PC-3 (cell line): ENCODE measurements at regions of chr2 and their contacts with region 1.

Region 1: DNA sequence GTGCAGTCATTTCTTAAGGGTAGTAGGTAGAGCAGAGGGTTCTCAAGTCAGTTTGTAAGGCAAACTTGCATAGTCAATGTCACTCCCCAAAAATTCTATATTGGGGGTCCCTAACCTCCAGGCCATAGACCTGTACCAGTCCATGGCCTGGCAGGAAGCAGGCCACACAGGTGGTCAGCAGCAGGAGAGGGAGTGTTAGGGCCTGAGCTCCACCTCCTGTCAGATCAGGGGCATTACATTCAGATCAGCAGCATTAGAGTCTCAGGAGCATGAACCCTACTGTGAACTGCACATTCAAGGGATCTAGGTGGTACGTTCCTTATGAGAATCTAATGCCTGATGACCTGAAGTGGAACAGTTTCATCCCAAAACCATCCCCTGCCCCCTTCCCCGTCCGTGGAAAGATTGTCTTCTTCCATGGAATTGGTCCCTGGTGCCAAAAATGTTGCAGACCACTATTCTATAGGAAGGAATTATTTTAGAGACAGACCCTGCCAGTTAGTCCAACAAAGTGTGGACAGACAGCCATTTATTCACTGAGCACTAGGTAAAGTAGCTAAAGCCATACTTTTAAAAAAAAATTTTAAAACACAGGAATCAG is 6.7 kb downstream of the COA5 start:
- DNase-seq: peak; percentile 61
- ATAC-seq: peak; percentile 85
- H3K4me3 ChIP-seq: no peak overlapping the region
- H3K27ac ChIP-seq: no peak overlapping the region
- H3K4me1 ChIP-seq: peaks cover 30% of the 10 kb centered on the region
- H3K27me3 ChIP-seq: no peaks in the 10 kb centered on the region
- CTCF ChIP-seq: peak; percentile 86

Region 2: DNA sequence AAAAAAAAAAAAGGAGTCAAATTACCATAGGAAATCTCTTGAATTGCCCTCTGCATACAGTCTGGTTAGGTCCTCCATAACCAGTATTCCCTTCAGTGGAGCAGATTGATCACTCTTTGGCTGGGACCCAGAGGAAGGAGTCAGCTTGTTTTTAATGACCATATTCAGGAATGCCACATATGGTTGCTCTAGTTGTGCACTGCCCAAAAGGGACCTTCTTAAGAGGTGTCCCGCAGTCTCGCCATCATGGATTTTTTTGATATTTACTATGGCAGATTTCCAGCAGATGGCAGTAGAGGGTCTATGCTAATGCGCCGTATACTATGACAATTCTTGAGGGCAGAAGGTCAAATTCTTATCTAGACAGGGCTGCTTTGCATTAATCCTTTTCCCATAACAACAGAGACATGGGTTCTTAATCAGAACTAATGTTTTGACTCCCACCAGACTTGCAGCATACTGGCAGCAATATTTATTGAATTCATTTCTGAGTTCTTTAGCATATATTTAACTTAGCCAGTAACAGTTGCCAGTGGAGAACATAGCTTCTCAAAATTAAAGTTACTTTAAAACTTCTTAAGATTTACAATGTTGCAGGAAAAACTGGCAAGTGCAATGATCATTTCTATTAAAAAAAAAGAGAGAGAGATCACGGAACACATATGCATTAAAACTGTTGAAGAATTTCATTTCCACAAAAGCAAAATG is 188.7 kb before region 1 on chr2:
- CTCF ChIA-PET with region 1: no interaction called
- POLR2A ChIA-PET with region 1: no interaction called
- intact Hi-C with region 1: loop called (anchors 1 kb)
- DNase-seq: peak; percentile 87
- ATAC-seq: peak; percentile 93
- H3K4me3 ChIP-seq: no peak overlapping the region
- H3K27ac ChIP-seq: no peak overlapping the region
- H3K4me1 ChIP-seq: no peaks in the 10 kb centered on the region; the same call in 1 of the 2 replicates
- H3K27me3 ChIP-seq: no peaks in the 10 kb centered on the region
- CTCF ChIP-seq: peak; percentile 82

Region 3: GRCh38 chr2:100453853-100454252 is 1852.2 kb after region 1 on chr2:
- CTCF ChIA-PET with region 1: no interaction called
- POLR2A ChIA-PET with region 1: no interaction called
- intact Hi-C with region 1: no loop called
- DNase-seq: no peak
- ATAC-seq: no peak
- H3K4me3 ChIP-seq: no peak overlapping the region
- H3K27ac ChIP-seq: no peak overlapping the region
- H3K4me1 ChIP-seq: no peaks in the 10 kb centered on the region; the same call in 1 of the 2 replicates
- H3K27me3 ChIP-seq: no peaks in the 10 kb centered on the region; the same call in 1 of the 2 replicates
- CTCF ChIP-seq: no peak